ENCODE measurements at regions of chr7 and their contacts with region 1.

Region 1: GRCh38 chr7:111741811-111742240 is 179.5 kb upstream of the IMMP2L start:
- DNase-seq: peak; percentile 74 to 87 (median 82)
- ATAC-seq: peak; percentile 95
- H3K4me3 ChIP-seq: no peak overlapping the region
- H3K27ac ChIP-seq: no peak overlapping the region
- H3K4me1 ChIP-seq: no peaks in the 10 kb centered on the region
- H3K27me3 ChIP-seq: peaks cover 9 to 15% of the 10 kb centered on the region in 2 experiments; a peak in 4 of 5 replicates
- CTCF ChIP-seq: peak; percentile 93 to 98 (median 93)
- EP300 ChIP-seq: no peak
- POLR2A ChIP-seq: no peak
- RAD21 ChIP-seq: peak; percentile 95 to 97

Region 2: DNA sequence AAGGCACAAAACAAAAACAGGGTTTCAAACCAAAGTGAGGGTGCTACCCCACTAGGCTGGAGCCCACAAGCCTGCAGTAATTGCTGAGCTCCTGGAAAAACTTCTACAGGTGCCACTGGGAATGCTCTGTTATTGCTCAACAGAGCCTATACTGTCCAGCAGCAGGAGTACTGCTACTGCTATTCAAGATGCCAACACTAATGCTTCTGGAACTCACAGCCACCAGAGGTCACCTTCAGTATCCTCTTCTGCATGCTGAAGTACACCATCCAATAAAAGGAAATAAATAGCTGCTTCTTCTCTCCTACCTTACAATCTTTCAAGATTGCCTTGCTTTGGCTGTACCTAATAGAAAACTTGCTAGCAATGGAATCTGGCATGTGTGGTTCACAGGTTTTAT is 428.9 kb before region 1 on chr7:
- CTCF ChIA-PET with region 1: no interaction called
- POLR2A ChIA-PET with region 1: no interaction called
- in situ Hi-C with region 1: no loop called
- intact Hi-C with region 1: no loop called
- DNase-seq: peak in 1 of 4 experiments; percentile 23
- ATAC-seq: peak; percentile 82
- H3K4me3 ChIP-seq: no peak overlapping the region
- H3K27ac ChIP-seq: no peak overlapping the region
- H3K4me1 ChIP-seq: peaks cover 0 to 9% of the 10 kb centered on the region in 2 experiments; a peak in 2 of 5 replicates
- H3K27me3 ChIP-seq: no peaks in the 10 kb centered on the region
- CTCF ChIP-seq: peak in 2 of 3 experiments; percentile 14 to 25; a peak in 2 of 6 replicates
- EP300 ChIP-seq: no peak
- POLR2A ChIP-seq: no peak
- RAD21 ChIP-seq: no peak; a peak in 1 of 4 replicates

Region 3: DNA sequence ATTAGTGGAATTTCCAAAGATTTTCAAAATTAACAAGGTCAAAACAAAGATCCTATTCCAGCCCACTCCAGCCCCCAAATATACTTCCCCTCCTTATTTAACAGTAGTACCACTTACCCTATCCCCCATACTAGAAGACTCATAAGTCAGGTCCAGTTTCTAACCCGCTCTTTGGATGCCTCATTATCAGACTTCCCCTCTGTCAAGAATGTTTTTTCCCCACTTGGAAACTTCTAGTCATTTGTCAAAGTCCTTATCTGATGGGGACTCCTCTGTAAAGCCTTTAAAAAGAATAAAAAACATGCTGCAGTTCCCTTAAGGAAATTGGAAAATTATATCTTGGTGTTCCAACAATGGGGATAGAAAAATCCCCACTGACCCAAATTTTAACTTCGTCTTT is 249.6 kb before region 1 on chr7:
- CTCF ChIA-PET with region 1: no interaction called
- POLR2A ChIA-PET with region 1: no interaction called
- in situ Hi-C with region 1: loop called (anchors 5 kb)
- intact Hi-C with region 1: no loop called
- DNase-seq: peak in 2 of 4 experiments; percentile 30 to 33
- ATAC-seq: peak; percentile 34; the same call in 1 of the 3 replicates
- H3K4me3 ChIP-seq: no peak overlapping the region
- H3K27ac ChIP-seq: no peak overlapping the region
- H3K4me1 ChIP-seq: no peaks in the 10 kb centered on the region
- H3K27me3 ChIP-seq: no peaks in the 10 kb centered on the region
- CTCF ChIP-seq: no peak
- EP300 ChIP-seq: no peak
- POLR2A ChIP-seq: no peak
- RAD21 ChIP-seq: 0 out of 4 replicates have a peak, but pooled peaks of 1 of the 2 experiments have one; percentile 19

Region 4: GRCh38 chr7:111730476-111731300 is 11.1 kb before region 1 on chr7:
- CTCF ChIA-PET with region 1: interaction called, 10 read pairs
- POLR2A ChIA-PET with region 1: interaction called, 4 read pairs
- in situ Hi-C with region 1: no loop called
- intact Hi-C with region 1: no loop called
- DNase-seq: peak; percentile 65 to 86 (median 71)
- ATAC-seq: peak; percentile 89
- H3K4me3 ChIP-seq: no peak overlapping the region
- H3K27ac ChIP-seq: no peak overlapping the region
- H3K4me1 ChIP-seq: peaks cover 3 to 10% of the 10 kb centered on the region in 2 experiments; a peak in 3 of 5 replicates
- H3K27me3 ChIP-seq: no peaks in the 10 kb centered on the region
- CTCF ChIP-seq: peak; percentile 82 to 93 (median 89)
- EP300 ChIP-seq: no peak
- POLR2A ChIP-seq: no peak
- RAD21 ChIP-seq: peak; percentile 79 to 95

Region 5: GRCh38 chr7:111855161-111855856 is 113.5 kb after region 1 on chr7:
- CTCF ChIA-PET with region 1: interaction called, 8 read pairs
- POLR2A ChIA-PET with region 1: no interaction called
- in situ Hi-C with region 1: no loop called
- intact Hi-C with region 1: loop called (anchors 5 kb)
- DNase-seq: peak in 2 of 4 experiments; percentile 19 to 40
- ATAC-seq: peak; percentile 86
- H3K4me3 ChIP-seq: no peak overlapping the region
- H3K27ac ChIP-seq: no peak overlapping the region
- H3K4me1 ChIP-seq: no peaks in the 10 kb centered on the region
- H3K27me3 ChIP-seq: peaks cover 4 to 10% of the 10 kb centered on the region in 2 experiments; a peak in 2 of 5 replicates
- CTCF ChIP-seq: peak; percentile 59 to 62 (median 60)
- EP300 ChIP-seq: no peak
- POLR2A ChIP-seq: no peak
- RAD21 ChIP-seq: peak in 1 of 2 experiments; percentile 43; a peak in 2 of 4 replicates

Region 6: GRCh38 chr7:112414855-112415490 is 673.1 kb after region 1 on chr7:
- CTCF ChIA-PET with region 1: interaction called, 6 read pairs
- POLR2A ChIA-PET with region 1: no interaction called
- in situ Hi-C with region 1: no loop called
- intact Hi-C with region 1: loop called (anchors 2 kb)
- DNase-seq: peak; percentile 56 to 76 (median 68)
- ATAC-seq: peak; percentile 94
- H3K4me3 ChIP-seq: no peak overlapping the region
- H3K27ac ChIP-seq: no peak overlapping the region
- H3K4me1 ChIP-seq: no peaks in the 10 kb centered on the region
- H3K27me3 ChIP-seq: peaks cover 0 to 9% of the 10 kb centered on the region in 2 experiments; a peak in 2 of 5 replicates
- CTCF ChIP-seq: peak; percentile 63 to 82 (median 63)
- EP300 ChIP-seq: no peak
- POLR2A ChIP-seq: no peak
- RAD21 ChIP-seq: peak; percentile 84 to 86

Region 7: GRCh38 chr7:112898432-112899290 is 1156.8 kb after region 1 on chr7:
- CTCF ChIA-PET with region 1: no interaction called
- POLR2A ChIA-PET with region 1: no interaction called
- in situ Hi-C with region 1: no loop called
- intact Hi-C with region 1: loop called (anchors 1 kb)
- DNase-seq: peak; percentile 68 to 86 (median 72)
- ATAC-seq: peak; percentile 99
- H3K4me3 ChIP-seq: no peak overlapping the region
- H3K27ac ChIP-seq: no peak overlapping the region
- H3K4me1 ChIP-seq: no peaks in the 10 kb centered on the region; a peak in 1 of 5 replicates
- H3K27me3 ChIP-seq: no peaks in the 10 kb centered on the region
- CTCF ChIP-seq: peak; percentile 88 to 95 (median 91)
- EP300 ChIP-seq: no peak
- POLR2A ChIP-seq: no peak
- RAD21 ChIP-seq: peak; percentile 94 to 97

Region 8: DNA sequence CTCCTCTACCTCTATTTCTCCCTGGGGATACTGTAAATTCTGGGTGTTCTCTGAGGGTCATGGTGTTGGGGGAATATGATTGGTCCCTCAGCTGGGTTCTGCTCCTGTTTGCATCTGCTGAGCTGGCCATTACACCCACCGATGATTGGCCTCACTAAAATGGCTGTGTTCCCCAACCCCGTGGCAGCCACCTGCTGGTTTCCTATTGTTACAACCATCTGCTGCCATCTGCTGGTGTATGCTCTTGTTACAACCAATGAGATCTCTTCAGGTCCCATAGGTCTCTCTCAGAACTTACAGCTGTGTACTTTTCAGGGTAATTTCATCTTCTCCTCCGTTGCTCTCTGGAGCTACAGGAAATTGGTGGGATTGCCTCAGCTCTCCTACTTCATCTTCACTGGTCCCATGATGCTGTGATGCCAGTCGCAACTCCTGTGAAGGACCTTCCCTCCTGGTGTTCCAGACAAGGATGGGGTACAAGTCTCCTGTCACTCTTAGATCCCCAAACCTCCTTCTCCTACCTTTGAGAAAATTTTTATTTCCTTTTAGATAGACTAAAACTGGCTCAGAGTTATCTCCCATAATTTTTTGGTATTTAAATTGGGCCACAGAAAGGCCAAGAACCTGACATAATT is 1680.0 kb after region 1 on chr7:
- CTCF ChIA-PET with region 1: interaction called, 4 read pairs
- POLR2A ChIA-PET with region 1: no interaction called
- in situ Hi-C with region 1: no loop called
- intact Hi-C with region 1: loop called (anchors 5 kb)
- DNase-seq: peak; percentile 78 to 93 (median 80)
- ATAC-seq: peak; percentile 100
- H3K4me3 ChIP-seq: no peak overlapping the region
- H3K27ac ChIP-seq: no peak overlapping the region
- H3K4me1 ChIP-seq: no peaks in the 10 kb centered on the region
- H3K27me3 ChIP-seq: no peaks in the 10 kb centered on the region
- CTCF ChIP-seq: peak; percentile 95 to 99 (median 99)
- EP300 ChIP-seq: no peak
- POLR2A ChIP-seq: no peak
- RAD21 ChIP-seq: peak; percentile 94 to 95